MCF 10A (cell line): ENCODE measurements at regions of chr2 and their contacts with region 1.

Region 1: DNA sequence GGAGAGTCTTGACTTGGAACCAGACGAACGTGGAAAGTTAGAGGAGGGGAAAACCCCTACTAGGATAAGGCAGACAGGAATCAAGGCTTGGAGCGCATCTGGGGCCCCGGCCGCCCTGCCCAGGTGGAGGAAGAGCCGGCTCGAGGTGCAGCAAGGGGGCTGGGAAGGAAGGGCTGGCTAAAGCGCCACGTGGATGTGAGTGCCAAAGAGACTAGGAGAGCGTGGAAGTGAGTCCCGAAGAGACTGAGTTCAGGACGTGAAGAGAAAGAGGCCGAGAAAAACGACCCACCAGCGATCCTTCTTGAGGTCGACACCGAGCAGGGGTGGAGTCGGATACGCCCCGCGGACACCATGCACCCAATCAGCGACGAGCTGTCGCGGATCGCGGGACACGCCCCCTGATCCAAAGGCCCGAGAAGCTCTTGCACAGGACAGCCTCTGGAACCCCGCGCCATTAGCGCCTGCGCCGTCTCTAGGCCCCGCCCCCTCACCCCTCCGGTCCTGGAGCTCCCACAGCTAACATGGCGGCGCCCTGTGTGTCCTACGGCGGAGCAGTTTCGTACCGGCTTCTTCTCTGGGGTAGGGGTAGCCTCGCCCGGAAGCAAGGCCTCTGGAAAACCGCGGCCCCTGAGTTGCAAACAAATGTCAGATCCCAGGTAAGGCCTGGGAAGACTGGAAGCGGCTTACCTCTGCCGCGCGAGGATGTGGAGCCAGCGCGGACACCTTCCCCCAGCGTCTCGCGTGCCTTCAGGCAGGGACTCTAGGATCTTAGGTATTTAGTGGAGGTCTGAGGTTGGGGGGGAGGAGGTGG is at the start of gene MRPS9:
- DNase-seq: peak; percentile 96
- H3K4me3 Mint-ChIP-seq: peak within 1 kb of the TSS; percentile 85
- H3K27ac Mint-ChIP-seq: peak within 1 kb of the TSS; percentile 88
- H3K4me1 Mint-ChIP-seq: peaks cover 23% of the 10 kb centered on the region
- H3K27me3 Mint-ChIP-seq: no peaks in the 10 kb centered on the region
- CTCF ChIP-seq: no peak
- total RNA-seq, gene MRPS9: 30.4 and 40.0 TPM in 2 replicates

Region 2: GRCh38 chr2:105005181-105005951 is 32.4 kb before region 1 on chr2:
- CTCF ChIA-PET with region 1: interaction called, 5 read pairs
- POLR2A ChIA-PET with region 1: interaction called, 14 read pairs
- intact Hi-C with region 1: no loop called
- DNase-seq: peak; percentile 58
- H3K4me3 Mint-ChIP-seq: no peak overlapping the region
- H3K27ac Mint-ChIP-seq: peak overlapping the region; percentile 17
- H3K4me1 Mint-ChIP-seq: peaks cover 6% of the 10 kb centered on the region
- H3K27me3 Mint-ChIP-seq: no peaks in the 10 kb centered on the region
- CTCF ChIP-seq: no peak

Region 3: DNA sequence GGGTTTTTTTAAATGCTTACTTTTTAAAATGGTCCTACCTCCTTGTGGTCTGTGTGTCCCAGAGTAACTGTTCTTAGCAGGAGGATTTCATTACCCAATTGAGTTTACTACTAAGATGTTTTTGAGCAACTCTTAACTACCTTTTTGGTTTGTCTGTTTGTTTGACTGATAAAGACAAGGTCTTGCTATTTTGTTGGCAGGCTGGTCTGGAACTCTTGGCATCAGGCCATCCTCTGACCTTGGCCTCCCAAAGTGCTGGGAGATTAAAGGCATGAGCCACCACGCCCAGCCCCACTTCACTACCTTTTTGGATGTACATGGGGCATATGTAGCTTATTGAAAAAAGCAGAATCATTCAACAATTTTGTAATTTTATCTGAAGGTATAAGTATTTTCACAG is 15.0 kb after region 1 on chr2:
- CTCF ChIA-PET with region 1: no interaction called
- POLR2A ChIA-PET with region 1: interaction called, 15 read pairs
- intact Hi-C with region 1: no loop called
- DNase-seq: peak; percentile 54
- H3K4me3 Mint-ChIP-seq: no peak overlapping the region
- H3K27ac Mint-ChIP-seq: peak overlapping the region; percentile 47
- H3K4me1 Mint-ChIP-seq: peaks cover 8% of the 10 kb centered on the region
- H3K27me3 Mint-ChIP-seq: no peaks in the 10 kb centered on the region
- CTCF ChIP-seq: no peak

Region 4: GRCh38 chr2:105102963-105103421 is 65.2 kb after region 1 on chr2:
- CTCF ChIA-PET with region 1: no interaction called
- POLR2A ChIA-PET with region 1: no interaction called
- intact Hi-C with region 1: no loop called
- DNase-seq: peak; percentile 58
- H3K4me3 Mint-ChIP-seq: no peak overlapping the region
- H3K27ac Mint-ChIP-seq: no peak overlapping the region
- H3K4me1 Mint-ChIP-seq: peaks cover 14% of the 10 kb centered on the region
- H3K27me3 Mint-ChIP-seq: no peaks in the 10 kb centered on the region
- CTCF ChIP-seq: no peak